Psoas muscle (tissue), 8 donors: ENCODE measurements at regions of chr5 and their contacts with region 1.

Region 1: GRCh38 chr5:35963381-35963843 is 25.0 kb upstream of the CAPSL start:
- DNase-seq: no peak
- ATAC-seq: peak in 2 of 4 donors; percentile 66 to 71
- H3K4me3 ChIP-seq: peak overlapping the region; percentile 29
- H3K27ac ChIP-seq: no peak overlapping the region
- H3K4me1 ChIP-seq: no peaks in the 10 kb centered on the region
- H3K27me3 ChIP-seq: no peaks in the 10 kb centered on the region
- CTCF ChIP-seq: peak; percentile 73

Region 2: GRCh38 chr5:36041538-36041846 is 78.1 kb after region 1 on chr5:
- intact Hi-C with region 1: loop called (anchors 2 kb)
- DNase-seq: no peak
- ATAC-seq: peak in 3 of 4 donors; percentile 66 to 76 (median 72)
- H3K4me3 ChIP-seq: no peak overlapping the region
- H3K27ac ChIP-seq: no peak overlapping the region
- H3K4me1 ChIP-seq: peaks cover 8% of the 10 kb centered on the region
- H3K27me3 ChIP-seq: no peaks in the 10 kb centered on the region
- CTCF ChIP-seq: peak; percentile 47

Region 3: DNA sequence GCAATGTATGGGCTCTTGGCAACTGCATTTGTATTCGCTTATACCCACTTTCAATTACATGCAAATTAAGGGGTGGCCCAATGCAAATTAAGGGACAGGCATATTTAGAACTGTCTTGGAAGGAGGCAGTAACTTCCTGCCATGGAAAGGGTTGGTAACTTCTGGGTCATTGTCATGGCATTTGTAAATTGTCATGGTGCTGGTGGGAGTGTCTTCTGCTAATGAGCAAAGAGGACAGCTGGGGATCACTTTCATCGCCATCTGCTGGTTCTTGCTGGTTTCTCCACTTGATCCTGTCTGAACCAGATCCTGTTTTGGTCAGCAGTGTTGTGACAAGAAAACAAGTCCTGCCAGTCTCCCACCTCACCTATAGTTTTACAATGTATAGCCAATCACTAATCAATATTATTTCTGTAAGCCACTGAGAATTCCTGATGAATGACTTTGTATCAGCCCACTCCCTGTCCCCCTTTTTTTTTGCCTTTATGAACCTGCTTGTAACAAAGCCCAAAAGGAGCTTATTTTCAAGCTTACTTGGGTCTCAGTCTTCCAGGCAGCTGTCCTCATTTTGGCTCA is 126.7 kb after region 1 on chr5:
- intact Hi-C with region 1: loop called in 1 of 2 experiments (anchors 2 kb)
- DNase-seq: no peak
- ATAC-seq: peak in 2 of 4 donors; percentile 56 to 58
- H3K4me3 ChIP-seq: no peak overlapping the region
- H3K27ac ChIP-seq: no peak overlapping the region
- H3K4me1 ChIP-seq: no peaks in the 10 kb centered on the region
- H3K27me3 ChIP-seq: no peaks in the 10 kb centered on the region
- CTCF ChIP-seq: peak; percentile 18